Natural killer cell (primary cell): ENCODE measurements at regions of chr5 and their contacts with region 1.

Region 1: DNA sequence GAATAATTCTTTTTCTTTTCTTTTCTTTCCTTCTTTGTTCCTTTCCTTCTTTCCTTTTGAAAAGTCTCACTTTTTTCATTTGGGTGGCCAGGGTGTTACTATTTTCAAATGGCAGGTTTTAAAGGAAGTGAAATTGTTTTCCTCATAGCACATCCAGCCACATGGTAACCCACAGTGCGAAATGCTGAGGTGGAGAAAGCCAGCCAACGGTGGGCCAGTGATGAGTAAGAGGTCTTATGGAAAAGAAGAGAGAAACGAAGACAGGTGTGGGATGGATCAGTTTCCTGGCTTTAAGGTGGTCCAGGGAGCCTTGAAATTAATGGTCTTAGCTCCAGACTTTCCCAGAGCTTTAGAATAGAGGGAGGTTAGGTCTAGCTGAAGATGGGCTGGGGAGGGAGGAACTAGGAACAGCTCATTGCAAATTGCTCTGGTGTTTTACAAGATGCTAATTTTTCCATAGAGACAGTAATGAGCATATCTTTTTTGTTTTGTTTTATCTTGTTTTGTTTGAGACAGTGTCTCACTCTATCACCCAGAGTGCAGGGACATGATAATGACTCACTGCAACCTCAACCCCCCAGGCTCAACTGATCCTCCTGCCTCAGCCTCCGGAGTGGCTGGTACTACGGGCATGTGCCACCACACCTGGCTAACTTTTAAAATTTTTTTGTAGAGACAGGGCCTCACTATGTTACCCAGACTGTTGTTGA is 17.8 kb downstream of the ITK start:
- DNase-seq: peak; percentile 53 to 74
- ATAC-seq: peak; percentile 57 to 70 (median 66)
- H3K4me3 ChIP-seq: no peak overlapping the region
- H3K4me3 Mint-ChIP-seq: peak overlapping the region; percentile 73
- H3K27ac ChIP-seq: peak overlapping the region; percentile 48
- H3K27ac Mint-ChIP-seq: peak overlapping the region; percentile 82 to 97
- H3K4me1 ChIP-seq: peaks cover 70% of the 10 kb centered on the region
- H3K4me1 Mint-ChIP-seq: peaks cover 82 to 85% of the 10 kb centered on the region in 2 donors
- H3K27me3 ChIP-seq: no peaks in the 10 kb centered on the region
- H3K27me3 Mint-ChIP-seq: no peaks in the 10 kb centered on the region
- CTCF ChIP-seq: no peak

Region 2: DNA sequence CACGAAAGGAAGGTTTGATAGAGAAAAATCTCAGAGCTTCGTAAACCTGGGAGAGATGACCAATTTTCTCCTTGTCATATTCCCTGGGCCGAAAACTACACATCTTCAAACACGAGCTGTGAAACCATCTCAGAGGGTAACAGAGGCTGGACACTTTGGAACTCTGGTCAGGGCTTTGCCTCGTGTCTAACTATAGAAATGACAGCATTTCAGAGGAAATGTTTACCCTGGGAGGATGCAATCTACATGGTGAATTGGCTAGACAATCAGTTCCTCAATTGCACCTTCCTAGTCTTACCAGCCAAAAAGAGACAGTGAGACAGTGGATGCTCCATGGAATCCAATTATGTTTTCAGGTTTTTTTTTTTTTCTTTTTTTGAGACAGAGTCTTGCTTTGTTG is 456.9 kb before region 1 on chr5:
- intact Hi-C with region 1: no loop called
- DNase-seq: no peak
- ATAC-seq: no peak
- H3K4me3 ChIP-seq: no peak overlapping the region
- H3K4me3 Mint-ChIP-seq: no peak overlapping the region
- H3K27ac ChIP-seq: no peak overlapping the region
- H3K27ac Mint-ChIP-seq: no peak overlapping the region
- H3K4me1 ChIP-seq: no peaks in the 10 kb centered on the region
- H3K4me1 Mint-ChIP-seq: no peaks in the 10 kb centered on the region
- H3K27me3 ChIP-seq: no peaks in the 10 kb centered on the region
- H3K27me3 Mint-ChIP-seq: peaks cover 22 to 46% of the 10 kb centered on the region in 2 donors
- CTCF ChIP-seq: no peak

Region 3: GRCh38 chr5:156907667-156908066 is 290.8 kb before region 1 on chr5:
- intact Hi-C with region 1: no loop called
- DNase-seq: no peak
- ATAC-seq: no peak
- H3K4me3 ChIP-seq: no peak overlapping the region
- H3K4me3 Mint-ChIP-seq: no peak overlapping the region
- H3K27ac ChIP-seq: no peak overlapping the region
- H3K27ac Mint-ChIP-seq: no peak overlapping the region
- H3K4me1 ChIP-seq: peaks cover 5% of the 10 kb centered on the region
- H3K4me1 Mint-ChIP-seq: peaks cover 31 to 52% of the 10 kb centered on the region in 2 donors
- H3K27me3 ChIP-seq: no peaks in the 10 kb centered on the region
- H3K27me3 Mint-ChIP-seq: no peaks in the 10 kb centered on the region
- CTCF ChIP-seq: no peak

Region 4: GRCh38 chr5:157150995-157151394 is 47.4 kb before region 1 on chr5:
- intact Hi-C with region 1: no loop called
- DNase-seq: no peak
- ATAC-seq: no peak
- H3K4me3 ChIP-seq: no peak overlapping the region
- H3K4me3 Mint-ChIP-seq: no peak overlapping the region
- H3K27ac ChIP-seq: no peak overlapping the region
- H3K27ac Mint-ChIP-seq: no peak overlapping the region
- H3K4me1 ChIP-seq: peaks cover 5% of the 10 kb centered on the region
- H3K4me1 Mint-ChIP-seq: peaks cover 24 to 26% of the 10 kb centered on the region in 2 donors
- H3K27me3 ChIP-seq: no peaks in the 10 kb centered on the region
- H3K27me3 Mint-ChIP-seq: no peaks in the 10 kb centered on the region
- CTCF ChIP-seq: no peak

Region 5: GRCh38 chr5:157214861-157215513 is 16.6 kb after region 1 on chr5:
- intact Hi-C with region 1: loop called (anchors 2 kb)
- DNase-seq: peak in 1 of 2 donors; percentile 81
- ATAC-seq: peak; percentile 59 to 78 (median 66)
- H3K4me3 ChIP-seq: no peak overlapping the region
- H3K4me3 Mint-ChIP-seq: peak overlapping the region; percentile 89
- H3K27ac ChIP-seq: peak overlapping the region; percentile 73
- H3K27ac Mint-ChIP-seq: peak overlapping the region; percentile 86 to 92
- H3K4me1 ChIP-seq: peaks cover 76% of the 10 kb centered on the region
- H3K4me1 Mint-ChIP-seq: peaks cover 81 to 87% of the 10 kb centered on the region in 2 donors
- H3K27me3 ChIP-seq: no peaks in the 10 kb centered on the region
- H3K27me3 Mint-ChIP-seq: no peaks in the 10 kb centered on the region
- CTCF ChIP-seq: no peak

Region 6: GRCh38 chr5:158483281-158483860 is 1284.9 kb after region 1 on chr5:
- intact Hi-C with region 1: no loop called
- DNase-seq: no peak
- ATAC-seq: no peak
- H3K4me3 ChIP-seq: no peak overlapping the region
- H3K4me3 Mint-ChIP-seq: no peak overlapping the region
- H3K27ac ChIP-seq: no peak overlapping the region
- H3K27ac Mint-ChIP-seq: no peak overlapping the region
- H3K4me1 ChIP-seq: no peaks in the 10 kb centered on the region
- H3K4me1 Mint-ChIP-seq: no peaks in the 10 kb centered on the region
- H3K27me3 ChIP-seq: no peaks in the 10 kb centered on the region
- H3K27me3 Mint-ChIP-seq: peaks cover 0 to 11% of the 10 kb centered on the region in 2 donors
- CTCF ChIP-seq: no peak